ENCODE measurements at regions of chr2 and their contacts with region 1.

Region 1: DNA sequence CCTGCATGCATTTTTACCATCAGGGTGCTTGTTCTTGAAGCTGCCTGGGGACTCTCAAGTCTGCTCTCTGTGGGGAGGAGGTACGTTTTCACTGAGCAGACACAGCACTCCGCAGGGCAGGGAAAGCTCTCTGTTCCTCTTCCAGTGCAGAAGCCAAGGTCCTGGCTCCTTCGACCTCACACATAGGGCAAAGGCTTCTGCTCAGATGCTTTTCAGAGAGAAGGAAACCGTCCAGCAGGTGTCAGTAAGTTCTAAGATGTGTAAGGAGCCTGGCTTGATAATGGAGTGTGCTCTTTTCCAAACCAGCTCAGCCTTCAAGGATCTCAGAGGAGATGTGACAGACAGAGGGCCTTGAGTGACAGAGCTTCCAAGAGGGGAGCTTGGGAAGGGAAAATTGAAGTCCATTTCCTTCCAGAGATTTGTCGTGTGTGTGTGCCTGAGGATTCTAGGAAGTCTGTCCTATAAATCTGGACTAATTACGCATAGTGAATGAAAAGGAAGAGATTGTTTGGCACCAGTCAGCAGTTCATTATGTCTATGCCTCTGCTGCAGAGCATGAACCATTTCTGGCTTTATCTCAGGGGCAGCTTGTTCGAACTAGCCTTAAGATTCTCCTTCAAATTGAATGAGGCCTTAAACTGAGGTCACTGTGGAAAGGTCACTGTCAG is 67.3 kb upstream of the UPP2 start:
- DNase-seq: peak; percentile 68
- H3K4me3 Mint-ChIP-seq: no peak overlapping the region
- H3K27ac Mint-ChIP-seq: no peak overlapping the region
- H3K4me1 Mint-ChIP-seq: no peaks in the 10 kb centered on the region
- H3K27me3 Mint-ChIP-seq: peaks cover 16% of the 10 kb centered on the region
- CTCF ChIP-seq: peak; percentile 55

Region 2: GRCh38 chr2:158013891-158014290 is 20.4 kb before region 1 on chr2:
- CTCF ChIA-PET with region 1: interaction called, 14 read pairs
- POLR2A ChIA-PET with region 1: no interaction called
- intact Hi-C with region 1: no loop called
- DNase-seq: no peak
- H3K4me3 Mint-ChIP-seq: no peak overlapping the region
- H3K27ac Mint-ChIP-seq: no peak overlapping the region
- H3K4me1 Mint-ChIP-seq: peaks cover 6% of the 10 kb centered on the region
- H3K27me3 Mint-ChIP-seq: no peaks in the 10 kb centered on the region
- CTCF ChIP-seq: no peak

Region 3: GRCh38 chr2:158045362-158045761 is 11.0 kb after region 1 on chr2:
- CTCF ChIA-PET with region 1: interaction called, 12 read pairs
- POLR2A ChIA-PET with region 1: no interaction called
- intact Hi-C with region 1: no loop called
- DNase-seq: peak; percentile 15
- H3K4me3 Mint-ChIP-seq: no peak overlapping the region
- H3K27ac Mint-ChIP-seq: no peak overlapping the region
- H3K4me1 Mint-ChIP-seq: no peaks in the 10 kb centered on the region
- H3K27me3 Mint-ChIP-seq: no peaks in the 10 kb centered on the region
- CTCF ChIP-seq: no peak

Region 4: GRCh38 chr2:158179660-158180059 is 145.3 kb after region 1 on chr2:
- CTCF ChIA-PET with region 1: interaction called, 41 read pairs
- POLR2A ChIA-PET with region 1: no interaction called
- intact Hi-C with region 1: loop called (anchors 5 kb)
- DNase-seq: peak; percentile 26
- H3K4me3 Mint-ChIP-seq: no peak overlapping the region
- H3K27ac Mint-ChIP-seq: no peak overlapping the region
- H3K4me1 Mint-ChIP-seq: no peaks in the 10 kb centered on the region
- H3K27me3 Mint-ChIP-seq: peaks cover 19% of the 10 kb centered on the region
- CTCF ChIP-seq: peak; percentile 37

Region 5: GRCh38 chr2:158619496-158619895 is 585.2 kb after region 1 on chr2:
- CTCF ChIA-PET with region 1: interaction called, 22 read pairs
- POLR2A ChIA-PET with region 1: no interaction called
- intact Hi-C with region 1: loop called (anchors 5 kb)
- DNase-seq: peak; percentile 62
- H3K4me3 Mint-ChIP-seq: no peak overlapping the region
- H3K27ac Mint-ChIP-seq: peak overlapping the region; percentile 57
- H3K4me1 Mint-ChIP-seq: peaks cover 11% of the 10 kb centered on the region
- H3K27me3 Mint-ChIP-seq: no peaks in the 10 kb centered on the region
- CTCF ChIP-seq: no peak

Region 6: DNA sequence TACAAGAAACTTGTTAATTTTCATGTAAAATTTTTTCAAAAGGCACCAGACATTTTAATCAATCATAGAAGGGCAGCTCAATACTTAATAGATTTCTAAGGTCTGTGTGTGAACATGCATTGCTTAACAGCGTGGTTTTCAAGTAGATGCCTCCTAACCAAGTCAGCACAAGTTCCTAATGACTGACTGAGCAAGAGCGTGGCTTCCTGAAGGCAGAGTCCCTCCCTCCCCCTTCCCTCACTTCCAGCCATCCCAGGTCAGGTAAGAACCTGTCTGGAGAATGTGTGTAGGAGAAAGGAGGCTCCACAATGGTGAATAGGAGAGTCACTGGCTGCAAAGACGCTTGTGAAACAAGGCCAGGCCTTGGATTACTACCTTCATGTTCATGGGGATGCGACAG is 727.3 kb after region 1 on chr2:
- CTCF ChIA-PET with region 1: interaction called, 435 read pairs
- POLR2A ChIA-PET with region 1: no interaction called
- intact Hi-C with region 1: no loop called
- DNase-seq: peak; percentile 91
- H3K4me3 Mint-ChIP-seq: peak overlapping the region; percentile 54
- H3K27ac Mint-ChIP-seq: peak overlapping the region; percentile 81
- H3K4me1 Mint-ChIP-seq: peaks cover 7% of the 10 kb centered on the region
- H3K27me3 Mint-ChIP-seq: no peaks in the 10 kb centered on the region
- CTCF ChIP-seq: no peak